Transverse colon (tissue), 4 donors: ENCODE measurements at regions of chr17 and their contacts with region 1.

Region 1: GRCh38 chr17:9037736-9038135 is 16.4 kb downstream of the NTN1 start:
- DNase-seq: no peak
- H3K4me3 ChIP-seq: no peak overlapping the region
- H3K27ac ChIP-seq: no peak overlapping the region
- H3K4me1 ChIP-seq: no peaks in the 10 kb centered on the region
- H3K27me3 ChIP-seq: no peaks in the 10 kb centered on the region
- CTCF ChIP-seq: no peak
- EP300 ChIP-seq: no peak
- POLR2A ChIP-seq: no peak

Region 2: GRCh38 chr17:8698162-8699061 is 339.3 kb before region 1 on chr17:
- in situ Hi-C with region 1: no loop called
- intact Hi-C with region 1: no loop called
- DNase-seq: peak; percentile 15
- H3K4me3 ChIP-seq: peak overlapping the region in 1 of 4 donors; percentile 24
- H3K27ac ChIP-seq: peak overlapping the region; percentile 16 to 52 (median 16)
- H3K4me1 ChIP-seq: peaks cover 0 to 5% (median 4%) of the 10 kb centered on the region in 4 donors
- H3K27me3 ChIP-seq: peaks cover 5% of the 10 kb centered on the region
- CTCF ChIP-seq: no peak
- EP300 ChIP-seq: no peak
- POLR2A ChIP-seq: no peak

Region 3: DNA sequence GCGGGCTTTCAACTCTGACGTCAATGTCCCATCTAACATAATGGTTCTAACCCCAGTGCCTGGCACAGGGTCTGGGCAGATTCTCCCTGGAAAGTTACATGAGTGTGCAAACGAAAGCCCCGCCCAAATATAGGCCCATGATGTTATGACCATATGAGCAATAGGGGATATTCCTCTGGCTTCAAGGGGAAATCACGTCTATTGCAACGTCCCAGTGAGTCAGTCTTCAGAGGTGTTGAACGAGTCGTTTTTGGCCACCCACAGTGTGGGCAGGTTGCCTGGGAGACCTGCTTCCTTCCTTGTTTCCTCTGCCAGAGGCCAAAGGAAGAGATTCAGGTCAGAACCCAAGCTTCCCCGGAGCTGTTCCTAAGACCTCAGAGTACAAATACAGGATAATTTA is 102.5 kb before region 1 on chr17:
- in situ Hi-C with region 1: no loop called
- intact Hi-C with region 1: no loop called
- DNase-seq: no peak
- H3K4me3 ChIP-seq: no peak overlapping the region
- H3K27ac ChIP-seq: no peak overlapping the region
- H3K4me1 ChIP-seq: no peaks in the 10 kb centered on the region
- H3K27me3 ChIP-seq: no peaks in the 10 kb centered on the region
- CTCF ChIP-seq: no peak
- EP300 ChIP-seq: no peak
- POLR2A ChIP-seq: no peak

Region 4: DNA sequence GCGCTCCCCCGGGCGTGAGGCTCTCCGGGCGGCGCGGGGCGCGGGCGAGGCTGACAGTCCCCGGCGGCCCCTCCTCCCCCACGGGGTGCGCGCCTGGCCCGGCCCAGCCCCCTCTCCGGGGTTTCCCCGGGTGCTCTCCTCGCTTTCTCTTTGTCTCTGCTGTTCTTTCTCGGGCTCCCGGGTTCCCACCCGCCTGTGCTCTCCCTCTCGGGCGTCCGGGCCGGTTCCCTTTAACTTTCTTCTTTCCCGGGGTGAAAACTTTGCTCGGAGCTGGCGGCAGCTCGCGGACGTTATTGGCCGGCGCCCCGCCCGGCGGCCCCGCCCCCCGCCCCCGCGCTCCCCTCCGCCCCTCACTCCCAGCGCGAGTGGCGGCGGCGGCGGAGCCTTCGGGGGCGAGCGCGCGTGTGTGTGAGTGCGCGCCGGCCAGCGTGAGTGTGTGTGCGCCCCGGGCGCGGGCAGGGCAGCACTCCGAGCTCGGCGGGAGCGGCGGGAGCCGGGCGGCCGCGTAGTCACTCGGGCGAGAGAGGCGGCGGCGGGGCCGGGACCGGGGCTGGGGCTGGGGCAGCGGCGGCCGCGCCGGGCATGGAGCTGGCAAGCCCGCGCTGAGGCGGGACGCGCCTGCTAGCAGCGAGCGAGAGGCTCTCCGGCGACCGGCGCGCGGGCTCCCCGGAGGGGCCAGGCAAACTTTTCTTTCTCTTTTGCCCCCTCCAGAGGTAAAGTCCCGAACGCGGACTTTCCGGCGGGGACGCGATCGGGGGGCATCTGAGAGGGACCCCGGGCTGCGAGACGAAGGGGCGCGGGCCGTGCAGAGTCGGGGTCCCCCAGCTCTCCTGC is 16.4 kb before region 1 on chr17 and contains the start of gene NTN1:
- in situ Hi-C with region 1: no loop called
- intact Hi-C with region 1: loop called (anchors 1 kb)
- DNase-seq: peak; percentile 30
- H3K4me3 ChIP-seq: peak within 1 kb of the TSS; percentile 58 to 67 (median 60)
- H3K27ac ChIP-seq: peak within 1 kb of the TSS; percentile 72 to 85 (median 82)
- H3K4me1 ChIP-seq: peaks cover 3 to 33% (median 16%) of the 10 kb centered on the region in 4 donors
- H3K27me3 ChIP-seq: peaks cover 77% of the 10 kb centered on the region
- CTCF ChIP-seq: no peak
- EP300 ChIP-seq: no peak
- POLR2A ChIP-seq: no peak
- total RNA-seq, gene NTN1: 3.6 to 20.6 (median 7.2) TPM

Region 5: GRCh38 chr17:9072696-9073339 is 35.1 kb after region 1 on chr17:
- in situ Hi-C with region 1: no loop called
- intact Hi-C with region 1: no loop called
- DNase-seq: peak; percentile 35
- H3K4me3 ChIP-seq: no peak overlapping the region
- H3K27ac ChIP-seq: peak overlapping the region; percentile 17 to 68 (median 35)
- H3K4me1 ChIP-seq: peaks cover 0 to 13% (median 6%) of the 10 kb centered on the region in 4 donors
- H3K27me3 ChIP-seq: no peaks in the 10 kb centered on the region
- CTCF ChIP-seq: no peak
- EP300 ChIP-seq: no peak
- POLR2A ChIP-seq: no peak